Motor neuron (in vitro differentiated cells): ENCODE measurements at regions of chr17 and their contacts with region 1.

Region 1: DNA sequence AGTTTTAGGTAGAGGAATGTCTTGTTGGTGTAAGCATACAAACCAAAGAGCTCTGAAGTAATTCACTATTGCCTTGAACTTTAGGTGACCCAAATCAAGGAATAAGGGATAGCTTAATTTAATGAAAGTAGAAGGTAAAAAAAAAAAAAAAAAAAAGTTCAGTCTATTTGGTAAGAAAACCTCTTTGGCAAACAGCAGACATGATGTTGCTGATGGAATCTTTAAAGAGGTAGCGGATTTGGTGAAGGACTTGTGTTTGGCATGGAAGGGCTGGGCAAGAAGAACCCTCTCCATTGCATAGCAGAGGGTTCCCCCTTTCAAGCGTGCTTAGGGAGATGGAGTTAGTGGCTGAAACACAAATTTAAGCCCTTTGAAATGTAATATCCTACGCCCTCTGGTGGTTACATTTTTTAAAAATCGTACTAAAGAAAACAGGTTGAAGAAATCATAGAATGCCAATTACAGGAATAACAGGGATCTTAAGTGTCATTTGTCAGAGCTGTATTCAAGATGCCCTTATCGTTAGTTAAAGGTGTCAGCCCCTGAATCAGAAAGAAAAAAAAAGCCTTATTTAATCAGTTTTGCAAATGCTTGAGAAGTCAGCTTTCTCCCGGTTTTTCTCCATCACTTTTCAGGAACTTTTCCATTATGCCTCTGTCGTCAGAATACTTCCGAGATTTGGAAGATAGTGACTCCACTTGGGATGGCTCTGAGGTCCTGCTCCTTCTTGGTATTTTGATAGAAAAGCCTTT is 383.1 kb downstream of the KCNJ2 start:
- ATAC-seq: peak in 6 of 8 experiments; percentile 23 to 59 (median 36)
- H3K4me3 ChIP-seq: no peak overlapping the region
- H3K27ac ChIP-seq: no peak overlapping the region
- H3K4me1 ChIP-seq: no peaks in the 10 kb centered on the region

Region 2: GRCh38 chr17:69567130-69567529 is 985.3 kb before region 1 on chr17:
- in situ Hi-C with region 1: loop called in 3 of 9 experiments (anchors 10 to 25 kb)
- ATAC-seq: no peak
- H3K4me3 ChIP-seq: no peak overlapping the region
- H3K27ac ChIP-seq: no peak overlapping the region
- H3K4me1 ChIP-seq: no peaks in the 10 kb centered on the region

Region 3: DNA sequence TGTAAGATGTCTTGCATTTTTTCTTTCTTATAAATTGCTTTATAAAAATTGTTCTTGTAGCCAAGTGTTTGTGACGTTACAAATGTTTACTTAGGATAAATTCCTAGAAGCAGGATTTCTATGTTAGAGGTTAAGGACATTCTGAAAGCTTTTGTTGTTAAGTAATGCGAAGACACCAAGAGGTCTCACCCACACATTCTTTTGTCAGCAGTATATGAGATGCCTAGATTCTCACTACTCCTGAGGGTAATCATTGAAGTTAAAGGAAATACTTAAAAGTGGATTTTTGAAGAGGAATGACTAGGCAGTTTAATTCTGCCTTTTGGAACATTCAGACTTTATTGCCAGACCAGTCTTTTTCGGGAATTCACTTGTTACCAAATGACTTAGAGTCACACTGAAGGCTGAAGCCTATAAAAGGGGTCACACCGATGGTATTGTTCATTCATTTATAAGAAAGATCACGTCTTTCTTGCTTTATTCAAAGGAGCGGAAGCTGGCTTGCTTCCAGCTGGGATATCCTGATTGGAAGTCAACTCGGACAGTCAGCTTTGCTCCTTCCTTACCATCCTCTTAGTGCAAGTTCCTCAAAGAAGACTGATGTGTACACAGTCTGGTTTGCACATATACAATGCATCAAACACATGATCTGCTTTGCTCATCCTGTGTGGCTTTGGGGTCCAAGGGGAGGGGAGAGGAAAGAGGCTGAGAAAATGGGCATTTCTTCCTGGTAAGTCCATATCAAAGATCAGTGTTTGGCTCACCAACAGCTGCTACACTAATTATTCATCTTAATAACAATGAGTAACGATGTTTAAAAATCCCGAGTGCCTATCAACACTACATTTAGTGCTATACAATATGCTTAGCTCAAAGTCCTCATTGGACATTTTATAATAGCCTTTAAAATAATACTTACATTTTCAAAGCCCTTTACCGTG is 977.9 kb before region 1 on chr17:
- in situ Hi-C with region 1: loop called in 3 of 9 experiments (anchors 10 to 25 kb)
- ATAC-seq: peak in 2 of 8 experiments; percentile 30 to 43
- H3K4me3 ChIP-seq: no peak overlapping the region
- H3K27ac ChIP-seq: no peak overlapping the region
- H3K4me1 ChIP-seq: peaks cover 0 to 6% of the 10 kb centered on the region in 2 donors